ENCODE measurements at regions of chr12 and their contacts with region 1.

Region 1: DNA sequence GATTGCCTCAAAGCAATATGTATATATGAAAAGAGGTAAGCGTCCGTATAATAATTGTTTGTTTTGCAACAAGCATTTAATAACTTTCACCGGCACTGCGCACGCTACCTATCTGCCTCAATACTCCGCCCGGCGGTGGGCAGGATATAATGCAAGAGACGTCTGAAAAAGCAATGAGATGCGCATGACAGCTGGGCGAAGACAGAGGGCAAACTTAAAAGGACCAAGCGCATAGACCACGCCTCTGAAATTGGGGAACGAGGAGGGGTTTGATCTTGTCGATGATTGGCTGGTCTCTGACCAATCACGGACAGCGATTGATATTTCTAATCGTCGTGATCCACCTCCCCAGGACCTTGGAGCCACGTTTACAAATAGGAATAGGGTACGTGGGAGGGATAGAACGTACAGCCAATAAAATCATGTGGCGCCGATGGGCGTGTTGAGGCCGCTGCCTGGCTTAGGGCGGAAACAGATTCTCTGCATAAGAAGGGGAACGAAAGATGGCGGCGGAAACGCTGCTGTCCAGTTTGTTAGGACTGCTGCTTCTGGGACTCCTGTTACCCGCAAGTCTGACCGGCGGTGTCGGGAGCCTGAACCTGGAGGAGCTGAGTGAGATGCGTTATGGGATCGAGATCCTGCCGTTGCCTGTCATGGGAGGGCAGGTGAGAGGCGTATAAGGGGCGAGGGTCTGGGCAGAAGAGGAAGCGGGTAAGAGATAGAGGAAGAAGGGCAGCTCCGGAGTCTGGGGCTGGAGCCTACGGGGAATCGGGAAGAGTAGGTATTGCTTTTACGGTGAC is at the start of gene OS9:
- DNase-seq: peak; percentile 99
- ATAC-seq: peak; percentile 92
- H3K4me3 ChIP-seq: peak within 1 kb of the TSS; percentile 80 to 93 (median 89)
- H3K4me3 Mint-ChIP-seq: no peak within 1 kb of the TSS
- H3K27ac ChIP-seq: peak within 1 kb of the TSS; percentile 62 to 78
- H3K27ac Mint-ChIP-seq: no peak within 1 kb of the TSS
- H3K4me1 ChIP-seq: peaks cover 13 to 17% of the 10 kb centered on the region in 2 donors
- H3K4me1 Mint-ChIP-seq: peaks cover 13% of the 10 kb centered on the region
- H3K27me3 ChIP-seq: no peaks in the 10 kb centered on the region
- H3K27me3 Mint-ChIP-seq: peaks cover 13% of the 10 kb centered on the region
- CTCF ChIP-seq: peak; percentile 82
- total RNA-seq, gene OS9: 182 and 200 TPM in 2 replicates

Region 2: GRCh38 chr12:57340104-57340503 is 353.8 kb before region 1 on chr12:
- CTCF ChIA-PET with region 1: no interaction called
- POLR2A ChIA-PET with region 1: no interaction called
- intact Hi-C with region 1: no loop called
- DNase-seq: no peak
- ATAC-seq: no peak
- H3K4me3 ChIP-seq: no peak overlapping the region
- H3K4me3 Mint-ChIP-seq: no peak overlapping the region
- H3K27ac ChIP-seq: peak overlapping the region in 1 of 2 donors; percentile 30
- H3K27ac Mint-ChIP-seq: no peak overlapping the region
- H3K4me1 ChIP-seq: no peaks in the 10 kb centered on the region
- H3K4me1 Mint-ChIP-seq: peaks cover 5% of the 10 kb centered on the region
- H3K27me3 ChIP-seq: no peaks in the 10 kb centered on the region
- H3K27me3 Mint-ChIP-seq: no peaks in the 10 kb centered on the region
- CTCF ChIP-seq: no peak

Region 3: GRCh38 chr12:57546438-57547383 is 147.1 kb before region 1 on chr12 and contains the start of gene DCTN2:
- CTCF ChIA-PET with region 1: no interaction called
- POLR2A ChIA-PET with region 1: no interaction called
- intact Hi-C with region 1: loop called (anchors 1 kb)
- DNase-seq: peak; percentile 94
- ATAC-seq: peak; percentile 97
- H3K4me3 ChIP-seq: peak within 1 kb of the TSS; percentile 68 to 96 (median 85)
- H3K4me3 Mint-ChIP-seq: peak within 1 kb of the TSS; percentile 99
- H3K27ac ChIP-seq: peak within 1 kb of the TSS; percentile 58 to 90
- H3K27ac Mint-ChIP-seq: peak within 1 kb of the TSS; percentile 87
- H3K4me1 ChIP-seq: peaks cover 21 to 27% of the 10 kb centered on the region in 2 donors
- H3K4me1 Mint-ChIP-seq: peaks cover 51% of the 10 kb centered on the region
- H3K27me3 ChIP-seq: peaks cover 0 to 26% (median 10%) of the 10 kb centered on the region in 4 experiments
- H3K27me3 Mint-ChIP-seq: peaks cover 18% of the 10 kb centered on the region
- CTCF ChIP-seq: no peak
- total RNA-seq, gene DCTN2: 94.3 and 97.6 TPM in 2 replicates

Region 4: DNA sequence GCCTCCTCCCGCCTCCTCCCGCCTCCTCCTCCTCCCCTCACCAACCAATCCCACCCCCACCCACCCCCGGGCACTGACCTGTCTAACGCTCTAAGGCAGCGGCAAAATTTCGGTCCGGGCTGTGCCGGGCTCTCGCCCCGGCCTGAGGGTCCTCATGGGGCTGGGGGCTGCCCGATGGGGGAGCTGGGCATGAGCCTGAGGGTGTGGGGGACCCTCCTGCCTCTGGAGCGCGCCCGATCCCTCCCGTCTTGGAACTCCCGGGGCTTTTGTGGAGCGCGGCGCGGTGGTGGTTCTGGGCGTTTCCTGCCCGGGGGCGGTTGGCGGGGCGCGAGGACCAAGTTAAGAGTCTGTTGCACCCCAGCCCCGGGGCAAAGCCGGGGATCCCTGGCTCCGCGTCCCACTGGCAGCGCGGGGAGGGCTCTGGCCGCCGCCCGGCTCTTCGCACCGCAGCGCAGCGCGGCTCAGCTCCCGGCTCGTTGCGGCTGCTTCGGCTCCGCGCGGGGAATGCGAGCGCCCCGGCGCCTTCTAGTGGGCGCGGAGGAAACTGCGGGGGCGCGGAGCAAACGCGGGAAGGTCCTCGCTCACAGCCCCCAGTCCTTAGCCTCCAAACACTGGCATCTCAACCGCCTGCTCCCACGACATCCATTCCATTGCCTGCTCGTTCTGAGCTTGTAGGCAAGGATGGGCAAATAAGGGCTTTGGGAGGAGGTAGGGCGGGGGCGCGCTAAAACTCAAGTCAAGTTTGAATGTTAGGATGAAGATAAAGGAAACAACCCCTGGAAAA is 61.0 kb before region 1 on chr12 and contains the start of gene B4GALNT1:
- CTCF ChIA-PET with region 1: interaction called, 4 read pairs
- POLR2A ChIA-PET with region 1: no interaction called
- intact Hi-C with region 1: loop called (anchors 5 kb)
- DNase-seq: peak; percentile 82
- ATAC-seq: peak; percentile 97
- H3K4me3 ChIP-seq: peak within 1 kb of the TSS in 4 of 5 experiments; percentile 40 to 75 (median 56)
- H3K4me3 Mint-ChIP-seq: peak within 1 kb of the TSS; percentile 77
- H3K27ac ChIP-seq: no peak within 1 kb of the TSS
- H3K27ac Mint-ChIP-seq: no peak within 1 kb of the TSS
- H3K4me1 ChIP-seq: peaks cover 20 to 24% of the 10 kb centered on the region in 2 donors
- H3K4me1 Mint-ChIP-seq: peaks cover 19% of the 10 kb centered on the region
- H3K27me3 ChIP-seq: peaks cover 0 to 69% (median 43%) of the 10 kb centered on the region in 4 experiments
- H3K27me3 Mint-ChIP-seq: peaks cover 52% of the 10 kb centered on the region
- CTCF ChIP-seq: peak; percentile 98
- total RNA-seq, gene B4GALNT1: 0.22 TPM in 1 of 2 replicates, not detected in the other

Region 5: GRCh38 chr12:57744777-57745484 is 51.1 kb after region 1 on chr12 and contains the start of gene TSPAN31:
- CTCF ChIA-PET with region 1: interaction called, 9 read pairs
- POLR2A ChIA-PET with region 1: interaction called, 5 read pairs
- intact Hi-C with region 1: loop called (anchors 1 kb)
- DNase-seq: peak; percentile 97
- ATAC-seq: peak; percentile 86
- H3K4me3 ChIP-seq: peak within 1 kb of the TSS; percentile 68 to 90 (median 86)
- H3K4me3 Mint-ChIP-seq: peak within 1 kb of the TSS; percentile 92
- H3K27ac ChIP-seq: peak within 1 kb of the TSS; percentile 80 to 94
- H3K27ac Mint-ChIP-seq: peak within 1 kb of the TSS; percentile 91
- H3K4me1 ChIP-seq: peaks cover 33 to 52% of the 10 kb centered on the region in 2 donors
- H3K4me1 Mint-ChIP-seq: peaks cover 44% of the 10 kb centered on the region
- H3K27me3 ChIP-seq: no peaks in the 10 kb centered on the region
- H3K27me3 Mint-ChIP-seq: no peaks in the 10 kb centered on the region
- CTCF ChIP-seq: no peak
- total RNA-seq, gene TSPAN31: 29.6 and 33.5 TPM in 2 replicates

Region 6: GRCh38 chr12:57935839-57936512 is 242.1 kb after region 1 on chr12:
- CTCF ChIA-PET with region 1: no interaction called
- POLR2A ChIA-PET with region 1: no interaction called
- intact Hi-C with region 1: loop called (anchors 5 kb)
- DNase-seq: peak; percentile 96
- ATAC-seq: peak; percentile 92
- H3K4me3 ChIP-seq: peak overlapping the region; percentile 65 to 90 (median 73)
- H3K4me3 Mint-ChIP-seq: peak overlapping the region; percentile 91
- H3K27ac ChIP-seq: peak overlapping the region; percentile 95 to 99
- H3K27ac Mint-ChIP-seq: peak overlapping the region; percentile 97
- H3K4me1 ChIP-seq: peaks cover 17% of the 10 kb centered on the region in 2 donors
- H3K4me1 Mint-ChIP-seq: peaks cover 23% of the 10 kb centered on the region
- H3K27me3 ChIP-seq: no peaks in the 10 kb centered on the region
- H3K27me3 Mint-ChIP-seq: no peaks in the 10 kb centered on the region
- CTCF ChIP-seq: no peak

Measured in B cell (primary cell).